GM10248 (cell line): ENCODE measurements at regions of chr22 and their contacts with region 1.

Region 1: GRCh38 chr22:33563220-33563964 is 356.9 kb downstream of the LARGE1 start:
- DNase-seq: no peak
- CTCF ChIP-seq: no peak

Region 2: DNA sequence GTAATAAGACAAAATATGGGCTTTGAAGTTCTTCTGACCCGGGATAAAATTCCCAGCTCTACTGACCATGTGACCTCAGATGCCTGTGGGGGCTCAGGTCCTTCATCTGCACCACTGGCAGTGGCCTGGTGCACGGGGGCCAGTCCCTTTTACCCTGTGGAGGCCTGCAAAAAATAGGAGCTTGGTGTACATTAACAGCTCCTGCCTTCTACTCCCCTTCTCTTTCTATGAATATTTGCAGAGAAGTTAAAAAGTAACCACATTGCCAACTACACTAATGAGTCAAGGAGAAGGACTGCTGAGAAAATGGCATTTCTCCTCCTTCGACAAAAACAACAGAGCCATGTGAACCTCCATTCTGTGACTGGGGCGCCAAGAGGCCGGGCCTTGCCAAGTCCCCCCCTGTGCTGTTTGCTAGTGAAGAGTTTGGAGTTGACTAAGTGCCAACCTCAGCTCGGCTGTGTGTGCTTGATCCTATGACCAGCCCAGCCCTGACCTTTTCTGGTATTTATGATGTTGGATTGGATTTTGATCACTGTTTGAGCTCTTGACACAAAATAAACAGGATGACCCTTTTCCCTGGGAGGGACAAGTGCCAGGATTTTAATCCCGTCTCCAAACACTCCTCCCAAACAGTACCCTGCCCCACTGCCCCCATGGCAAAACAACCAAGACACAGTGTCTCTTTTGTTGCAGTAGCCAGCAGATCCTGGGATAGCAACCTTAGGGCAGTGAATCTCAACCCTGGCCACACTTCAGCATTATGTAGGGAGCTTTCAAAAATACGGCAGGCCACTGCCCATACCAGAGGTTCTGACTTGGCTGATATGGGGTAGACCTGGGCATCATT is 23.3 kb before region 1 on chr22:
- CTCF ChIA-PET with region 1: interaction called, 6 read pairs
- POLR2A ChIA-PET with region 1: interaction called, 10 read pairs
- DNase-seq: no peak
- CTCF ChIP-seq: no peak

Region 3: GRCh38 chr22:33579448-33580093 is 16.2 kb after region 1 on chr22:
- CTCF ChIA-PET with region 1: interaction called, 24 read pairs
- POLR2A ChIA-PET with region 1: no interaction called
- DNase-seq: peak; percentile 65
- CTCF ChIP-seq: peak; percentile 86